A549 (cell line): ENCODE measurements at regions of chr19 and their contacts with region 1.

Region 1: GRCh38 chr19:39532233-39533002 is at the start of gene EID2B:
- DNase-seq: peak; percentile 99 to 100
- ATAC-seq: peak; percentile 95 to 96
- H3K4me3 ChIP-seq: peak within 1 kb of the TSS; percentile 68
- H3K27ac ChIP-seq: peak within 1 kb of the TSS; percentile 83 to 88
- H3K4me1 ChIP-seq: peaks cover 14% of the 10 kb centered on the region
- CTCF ChIP-seq: peak; percentile 100
- EP300 ChIP-seq: no peak
- POLR2A ChIP-seq: peak; percentile 96
- RAD21 ChIP-seq: peak; percentile 100
- polyA plus RNA-seq, gene EID2B: 9.4 and 10.9 TPM in 2 replicates

Region 2: DNA sequence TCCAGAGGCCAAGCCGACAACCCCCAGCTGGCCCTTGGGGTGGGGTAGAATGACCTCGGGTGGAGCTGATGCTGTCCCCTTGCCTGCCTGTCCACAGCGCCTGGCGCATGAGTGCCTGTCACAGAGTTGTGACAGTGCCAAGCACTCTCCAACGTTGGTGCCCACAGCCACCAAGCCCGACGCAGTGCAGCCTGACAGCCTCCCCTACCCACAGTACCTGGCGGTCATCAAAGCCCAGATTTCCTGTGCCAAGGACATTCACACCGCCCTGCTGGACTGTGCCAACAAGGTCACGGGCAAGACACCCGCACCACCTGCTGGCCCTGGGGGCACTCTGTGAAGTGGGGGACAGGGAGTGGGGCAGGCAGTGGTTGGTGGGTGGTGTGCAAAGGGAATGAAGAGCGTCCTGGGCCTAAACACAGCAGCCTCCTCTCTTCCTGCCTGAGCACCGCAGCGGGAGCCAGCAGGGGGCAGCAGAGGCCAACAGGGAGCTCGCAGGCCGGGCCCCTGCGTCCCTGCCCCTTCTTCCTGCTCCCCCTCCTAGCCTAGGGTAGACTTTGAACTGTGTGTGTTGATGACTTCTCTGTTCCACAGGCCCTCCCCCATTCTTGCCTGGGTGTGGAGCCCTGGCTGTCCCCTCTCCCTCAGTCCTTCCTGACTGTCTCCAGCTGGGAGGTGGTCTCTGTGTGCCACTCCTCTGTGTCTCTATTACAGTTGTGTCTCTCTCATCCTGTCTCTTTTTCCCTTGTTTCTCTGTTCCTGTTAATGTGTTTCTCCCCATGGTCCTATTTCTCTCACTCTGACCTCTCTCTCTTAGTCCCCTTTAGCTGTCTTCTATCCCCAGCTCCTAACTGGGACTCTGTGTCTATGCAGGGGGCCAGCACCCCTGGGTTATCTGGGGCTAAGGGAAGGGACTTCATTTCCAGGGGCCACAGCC is 134.8 kb before region 1 on chr19:
- CTCF ChIA-PET with region 1: interaction called, 35 read pairs
- POLR2A ChIA-PET with region 1: interaction called, 3 read pairs
- DNase-seq: peak; percentile 98 to 99
- ATAC-seq: peak; percentile 52 to 84
- H3K4me3 ChIP-seq: peak overlapping the region; percentile 22; the same call in 2 of the 3 replicates
- H3K27ac ChIP-seq: peak overlapping the region; percentile 92 to 99
- H3K4me1 ChIP-seq: peaks cover 56% of the 10 kb centered on the region
- CTCF ChIP-seq: peak; percentile 100
- EP300 ChIP-seq: no peak; a peak in 1 of 5 replicates
- POLR2A ChIP-seq: peak; percentile 47; the same call in 1 of the 2 replicates
- RAD21 ChIP-seq: peak; percentile 100

Region 3: GRCh38 chr19:39428283-39429112 is 103.9 kb before region 1 on chr19:
- CTCF ChIA-PET with region 1: interaction called, 10 read pairs
- POLR2A ChIA-PET with region 1: interaction called, 3 read pairs
- DNase-seq: peak; percentile 81 to 94
- ATAC-seq: peak; percentile 52 to 69
- H3K4me3 ChIP-seq: no peak overlapping the region
- H3K27ac ChIP-seq: peak overlapping the region; percentile 83 to 90
- H3K4me1 ChIP-seq: peaks cover 62% of the 10 kb centered on the region
- CTCF ChIP-seq: no peak
- EP300 ChIP-seq: no peak
- POLR2A ChIP-seq: no peak
- RAD21 ChIP-seq: no peak

Region 4: GRCh38 chr19:39480337-39481228 is 51.8 kb before region 1 on chr19 and contains the start of gene TIMM50:
- CTCF ChIA-PET with region 1: interaction called, 299 read pairs
- POLR2A ChIA-PET with region 1: interaction called, 7 read pairs
- DNase-seq: peak; percentile 97
- ATAC-seq: peak; percentile 91 to 96
- H3K4me3 ChIP-seq: peak within 1 kb of the TSS; percentile 70
- H3K27ac ChIP-seq: peak within 1 kb of the TSS; percentile 86 to 92
- H3K4me1 ChIP-seq: peaks cover 15% of the 10 kb centered on the region
- CTCF ChIP-seq: no peak
- EP300 ChIP-seq: no peak
- POLR2A ChIP-seq: peak; percentile 93
- RAD21 ChIP-seq: no peak
- polyA plus RNA-seq, gene TIMM50: 234 and 246 TPM in 2 replicates

Region 5: DNA sequence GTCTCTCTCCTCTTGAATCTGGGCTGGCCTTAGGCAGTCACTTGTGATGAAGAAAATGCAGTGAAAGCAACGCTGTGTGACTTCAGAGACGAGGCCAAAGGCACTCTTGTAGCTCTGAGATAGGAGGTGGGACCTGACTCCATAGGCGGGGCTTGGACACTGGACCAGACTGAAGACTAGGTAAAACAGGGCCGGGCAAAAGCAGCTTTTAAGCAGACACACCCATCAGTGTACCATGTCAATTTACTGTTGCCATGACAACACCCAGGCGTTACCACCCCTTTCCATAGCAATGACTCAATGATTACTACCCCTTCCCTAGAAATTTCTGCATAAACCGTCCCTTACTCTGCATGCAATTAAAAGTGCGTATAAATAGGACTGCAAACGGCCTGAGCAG is 14.2 kb after region 1 on chr19:
- CTCF ChIA-PET with region 1: interaction called, 63 read pairs
- POLR2A ChIA-PET with region 1: interaction called, 11 read pairs
- DNase-seq: peak in 1 of 2 experiments; percentile 45
- ATAC-seq: peak in 1 of 2 experiments; percentile 17; a peak in 2 of 6 replicates
- H3K4me3 ChIP-seq: no peak overlapping the region
- H3K27ac ChIP-seq: no peak overlapping the region
- H3K4me1 ChIP-seq: no peaks in the 10 kb centered on the region
- CTCF ChIP-seq: no peak
- EP300 ChIP-seq: no peak
- POLR2A ChIP-seq: no peak
- RAD21 ChIP-seq: no peak